Head of caudate nucleus (tissue), 42 donors: ENCODE measurements at regions of chr22 and their contacts with region 1.

Region 1: DNA sequence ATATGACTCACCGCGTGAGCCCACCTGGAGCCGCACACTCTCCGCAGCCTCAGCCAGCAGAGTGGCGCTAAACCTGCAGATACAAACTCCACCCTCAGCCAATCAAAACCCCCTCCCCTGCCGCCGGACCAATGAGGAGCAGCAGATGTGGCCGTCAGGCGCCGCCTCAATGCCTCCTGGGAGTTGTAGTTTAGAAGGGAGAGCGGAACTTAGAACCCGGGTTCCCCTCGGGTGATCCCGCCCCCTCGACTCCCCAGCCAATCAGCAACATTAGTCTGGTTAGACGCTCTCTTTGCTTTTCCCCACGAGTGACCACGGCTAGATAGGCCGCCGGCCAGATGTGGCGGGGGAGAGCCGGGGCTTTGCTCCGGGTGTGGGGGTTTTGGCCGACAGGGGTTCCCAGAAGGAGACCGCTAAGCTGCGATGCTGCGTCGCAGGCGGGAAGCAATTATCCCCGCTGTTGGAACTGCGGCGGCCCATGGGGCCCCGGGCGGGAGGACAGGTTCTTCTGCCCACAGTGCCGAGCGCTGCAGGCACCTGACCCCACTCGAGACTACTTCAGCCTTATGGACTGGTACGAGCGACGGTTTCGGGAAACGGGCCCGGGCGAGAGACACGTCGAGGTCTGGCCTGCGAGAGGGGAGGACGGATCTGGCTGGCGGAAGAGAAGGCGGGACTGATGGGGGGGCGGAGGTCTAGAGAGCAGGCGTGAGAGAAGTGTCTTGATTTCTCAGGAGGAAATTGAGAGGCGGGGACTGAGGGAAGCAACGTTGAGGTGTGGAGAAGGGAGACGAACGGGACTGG is at the starts of genes CHEK2 and HSCB:
- DNase-seq: peak; percentile 94 to 99 (median 98)

Region 2: DNA sequence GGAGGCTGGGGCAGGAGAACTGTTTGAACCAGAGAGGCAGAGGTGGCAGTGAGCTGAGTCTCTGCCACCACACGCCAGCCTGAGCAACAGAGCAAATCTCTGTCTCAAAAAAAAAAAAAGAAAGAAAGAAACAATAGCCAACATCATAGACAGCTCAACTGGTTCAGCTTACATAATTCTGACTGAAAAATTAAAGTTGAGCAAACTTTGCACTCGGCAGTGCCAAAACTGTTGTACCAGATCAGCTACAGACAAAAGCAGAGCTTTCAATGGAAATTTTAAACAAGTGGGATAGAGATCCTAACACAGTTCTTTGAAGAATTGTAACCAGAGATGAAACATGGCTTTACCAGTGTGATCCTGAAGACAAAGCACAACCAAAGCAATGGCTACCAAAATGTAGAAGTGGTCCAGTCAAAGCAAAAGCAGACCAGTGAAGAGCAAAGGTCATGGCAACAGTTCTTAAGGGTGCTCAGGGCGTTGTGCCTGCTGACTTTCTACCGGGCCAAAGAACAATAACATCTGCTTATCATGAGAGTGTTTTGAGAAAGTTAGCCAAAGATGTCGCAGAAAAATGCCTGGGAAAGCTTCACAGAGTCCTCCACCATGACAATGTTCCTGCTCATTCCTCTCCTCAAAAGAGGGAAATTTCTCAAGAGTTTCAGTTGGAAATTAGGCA is 121.6 kb before region 1 on chr22:
- intact Hi-C with region 1: no loop called
- DNase-seq: no peak

Region 3: GRCh38 chr22:28817919-28818909 is 76.3 kb after region 1 on chr22:
- intact Hi-C with region 1: no loop called
- DNase-seq: peak in 3 of 42 donors; percentile 27 to 56 (median 40)

Region 4: DNA sequence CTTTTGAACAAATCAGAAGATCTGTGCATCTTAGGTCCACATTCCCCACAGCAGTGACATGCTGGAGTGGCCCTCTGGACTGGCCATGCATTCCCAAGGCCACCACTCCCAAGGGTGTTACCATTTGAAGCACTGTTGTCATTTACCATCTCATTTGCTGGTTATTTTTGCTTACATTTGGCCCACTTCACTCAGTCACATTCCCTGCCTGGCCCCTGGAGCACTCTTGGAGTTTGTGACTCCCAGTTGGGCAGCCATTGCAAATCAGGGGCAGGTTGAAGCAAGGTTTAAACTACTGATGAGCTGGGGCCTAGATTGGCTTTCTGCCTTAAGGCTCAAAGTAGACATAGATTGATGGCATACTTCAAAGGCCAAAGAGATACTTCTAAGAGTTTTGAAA is 132.9 kb after region 1 on chr22:
- intact Hi-C with region 1: loop called (anchors 5 kb)
- DNase-seq: no peak